ENCODE measurements at regions of chr16 and their contacts with region 1.

Region 1: GRCh38 chr16:79386299-79386698 is 214.2 kb downstream of the MAF start:
- DNase-seq: no peak
- ATAC-seq: no peak
- H3K4me3 ChIP-seq: no peak overlapping the region
- H3K27ac ChIP-seq: no peak overlapping the region
- H3K4me1 ChIP-seq: no peaks in the 10 kb centered on the region
- H3K27me3 ChIP-seq: no peaks in the 10 kb centered on the region
- CTCF ChIP-seq: no peak

Region 2: DNA sequence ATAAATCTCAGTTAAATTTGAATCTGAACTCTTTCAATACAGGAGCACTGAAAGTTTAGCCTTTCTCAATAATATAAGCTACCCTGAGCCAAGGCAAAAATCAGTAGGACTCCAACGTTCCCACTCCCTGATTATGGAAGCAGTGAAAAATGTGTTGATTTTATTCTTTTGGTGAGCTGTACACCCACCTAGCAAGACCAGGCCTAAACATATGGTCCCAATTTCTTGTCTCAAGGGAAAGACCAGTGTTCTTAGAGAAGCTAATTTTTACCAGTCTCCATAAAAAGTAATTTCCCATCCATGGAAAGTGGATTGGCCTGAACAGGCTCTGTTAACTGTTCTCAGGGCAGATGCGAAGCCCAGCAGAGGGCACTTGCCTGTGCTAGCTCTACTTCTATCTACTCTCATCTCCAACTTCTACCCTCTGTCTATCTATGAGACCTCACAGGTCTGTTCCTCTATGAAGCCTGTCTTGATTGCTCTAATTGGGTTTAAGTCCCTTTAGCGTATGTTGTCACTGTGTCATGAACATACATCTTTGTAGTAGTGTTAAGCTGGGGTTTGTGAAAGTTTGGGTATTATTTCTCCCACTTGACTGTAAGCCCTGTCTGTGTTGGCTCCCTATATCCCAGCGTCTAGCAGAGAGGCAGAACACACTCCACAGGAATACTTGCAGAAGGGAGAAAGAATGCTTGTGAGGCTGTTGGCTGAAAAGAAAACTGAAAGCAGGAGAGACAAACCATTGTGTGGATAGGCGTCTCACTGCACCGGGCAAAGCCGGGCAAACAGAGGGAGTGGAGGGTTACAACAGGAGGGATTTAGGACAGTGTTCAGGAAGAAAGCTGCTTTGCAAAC is 381.3 kb after region 1 on chr16:
- CTCF ChIA-PET with region 1: no interaction called
- POLR2A ChIA-PET with region 1: no interaction called
- in situ Hi-C with region 1: no loop called
- intact Hi-C with region 1: loop called (anchors 5 kb)
- DNase-seq: no peak
- ATAC-seq: peak; percentile 55; the same call in 1 of the 2 replicates
- H3K4me3 ChIP-seq: peak overlapping the region in 1 of 2 experiments; percentile 33; a peak in 3 of 4 replicates
- H3K27ac ChIP-seq: no peak overlapping the region
- H3K4me1 ChIP-seq: no peaks in the 10 kb centered on the region
- H3K27me3 ChIP-seq: no peaks in the 10 kb centered on the region
- CTCF ChIP-seq: peak; percentile 49